Dendritic cell treated with granulocyte-macrophage colony-stimulating factor and Interleukin-4, amounts not matched to agents 40 ng/mL and 50 ng/mL, for 4 days (primary cell): ENCODE measurements at regions of chr1 and their contacts with region 1.

Region 1: DNA sequence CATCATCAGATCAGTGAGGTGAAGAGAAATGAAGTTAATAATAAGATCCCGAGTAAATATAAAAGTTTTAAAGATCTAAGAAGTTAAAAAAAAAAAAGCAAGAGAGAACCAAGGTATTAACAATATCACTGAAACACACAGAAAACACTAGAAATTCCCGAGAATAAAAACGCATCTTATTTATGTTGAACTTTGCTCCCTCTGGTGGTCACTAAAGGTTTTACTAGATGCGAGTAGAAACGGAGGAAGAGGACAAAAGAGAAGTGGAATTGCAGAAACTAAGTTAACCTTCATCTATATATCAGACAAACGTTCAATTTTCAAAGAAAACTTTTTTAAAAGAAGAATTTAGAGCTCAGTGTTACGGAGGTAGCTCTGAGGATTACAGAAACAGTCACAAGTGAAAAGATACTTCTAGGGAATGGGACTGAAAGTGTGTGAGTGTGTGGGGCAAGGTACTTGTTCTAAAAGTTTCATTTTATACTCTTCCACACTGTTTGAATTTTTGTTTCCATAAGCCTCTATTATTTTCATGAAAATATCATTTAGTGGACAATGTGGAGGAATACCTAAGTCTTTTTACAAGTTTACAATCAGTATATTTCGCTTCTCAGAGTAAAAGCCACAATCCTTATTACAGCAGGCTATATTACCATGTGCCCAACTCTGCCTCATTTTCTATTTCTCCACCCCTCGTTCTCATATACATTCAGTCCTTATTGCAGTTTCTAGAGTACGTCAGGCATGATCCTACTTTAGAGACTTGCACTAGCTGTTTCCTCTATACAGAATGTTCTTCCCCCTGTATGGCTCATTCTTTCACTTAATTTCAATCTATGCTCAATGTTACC is 19.7 kb downstream of the ACBD6 start:
- H3K4me3 Mint-ChIP-seq: no peak overlapping the region
- H3K27ac Mint-ChIP-seq: no peak overlapping the region
- H3K4me1 Mint-ChIP-seq: peaks cover 6% of the 10 kb centered on the region
- H3K27me3 Mint-ChIP-seq: no peaks in the 10 kb centered on the region

Region 2: GRCh38 chr1:179706339-179706941 is 776.2 kb before region 1 on chr1:
- intact Hi-C with region 1: loop called (anchors 5 kb)
- H3K4me3 Mint-ChIP-seq: no peak overlapping the region
- H3K27ac Mint-ChIP-seq: no peak overlapping the region
- H3K4me1 Mint-ChIP-seq: no peaks in the 10 kb centered on the region
- H3K27me3 Mint-ChIP-seq: no peaks in the 10 kb centered on the region

Region 3: GRCh38 chr1:180188091-180188506 is 294.6 kb before region 1 on chr1:
- intact Hi-C with region 1: loop called (anchors 5 kb)
- H3K4me3 Mint-ChIP-seq: no peak overlapping the region
- H3K27ac Mint-ChIP-seq: no peak overlapping the region
- H3K4me1 Mint-ChIP-seq: peaks cover 8% of the 10 kb centered on the region
- H3K27me3 Mint-ChIP-seq: no peaks in the 10 kb centered on the region

Region 4: DNA sequence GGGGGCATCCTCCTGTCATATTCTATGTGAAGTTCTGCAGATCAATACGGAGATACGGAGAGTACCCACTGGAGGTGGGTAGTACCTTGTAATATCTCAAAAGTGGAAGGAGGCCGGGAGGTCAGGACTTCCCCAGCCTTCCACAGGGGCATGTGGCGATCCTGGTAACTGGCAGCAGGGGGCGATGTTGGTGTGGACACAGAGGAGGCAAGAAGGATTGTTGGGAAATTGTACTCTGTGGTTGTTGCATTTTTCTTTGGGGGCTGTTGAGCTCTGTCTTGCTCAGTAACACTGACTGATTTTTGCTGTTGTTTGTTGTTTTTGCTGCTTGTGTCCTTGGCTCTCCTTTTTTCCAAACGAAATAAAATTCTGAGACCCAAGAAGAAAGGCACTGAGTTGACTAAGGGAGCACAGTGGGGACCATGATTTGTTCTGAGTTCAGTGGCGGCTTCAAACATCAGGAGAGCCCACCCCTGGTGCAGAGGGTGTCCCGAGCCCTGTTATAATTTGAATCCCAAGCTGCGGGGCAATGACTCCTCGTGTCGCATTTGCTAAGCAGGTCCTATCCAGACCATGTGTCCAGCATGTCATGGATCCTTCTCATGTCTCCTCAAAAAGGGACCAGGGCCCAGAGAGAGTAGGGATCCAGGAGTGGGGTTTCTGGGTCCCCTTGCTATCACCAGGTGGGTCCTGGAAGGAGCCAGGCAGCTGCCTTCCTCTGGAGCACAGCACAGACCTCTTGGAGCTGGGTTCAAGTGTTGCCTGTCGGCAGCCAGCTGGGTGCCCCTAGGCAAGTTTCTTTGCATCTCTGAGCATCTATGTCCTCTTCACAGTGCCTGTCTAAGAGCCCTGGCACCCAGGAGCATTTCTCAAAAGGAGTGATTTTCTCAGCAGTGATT is 229.8 kb before region 1 on chr1:
- intact Hi-C with region 1: loop called (anchors 1 kb)
- H3K4me3 Mint-ChIP-seq: no peak overlapping the region
- H3K27ac Mint-ChIP-seq: peak overlapping the region; percentile 53
- H3K4me1 Mint-ChIP-seq: peaks cover 28% of the 10 kb centered on the region
- H3K27me3 Mint-ChIP-seq: peaks cover 29% of the 10 kb centered on the region

Region 5: GRCh38 chr1:180415985-180416633 is 66.5 kb before region 1 on chr1:
- intact Hi-C with region 1: loop called (anchors 5 kb)
- H3K4me3 Mint-ChIP-seq: no peak overlapping the region
- H3K27ac Mint-ChIP-seq: no peak overlapping the region
- H3K4me1 Mint-ChIP-seq: peaks cover 5% of the 10 kb centered on the region
- H3K27me3 Mint-ChIP-seq: no peaks in the 10 kb centered on the region

Region 6: DNA sequence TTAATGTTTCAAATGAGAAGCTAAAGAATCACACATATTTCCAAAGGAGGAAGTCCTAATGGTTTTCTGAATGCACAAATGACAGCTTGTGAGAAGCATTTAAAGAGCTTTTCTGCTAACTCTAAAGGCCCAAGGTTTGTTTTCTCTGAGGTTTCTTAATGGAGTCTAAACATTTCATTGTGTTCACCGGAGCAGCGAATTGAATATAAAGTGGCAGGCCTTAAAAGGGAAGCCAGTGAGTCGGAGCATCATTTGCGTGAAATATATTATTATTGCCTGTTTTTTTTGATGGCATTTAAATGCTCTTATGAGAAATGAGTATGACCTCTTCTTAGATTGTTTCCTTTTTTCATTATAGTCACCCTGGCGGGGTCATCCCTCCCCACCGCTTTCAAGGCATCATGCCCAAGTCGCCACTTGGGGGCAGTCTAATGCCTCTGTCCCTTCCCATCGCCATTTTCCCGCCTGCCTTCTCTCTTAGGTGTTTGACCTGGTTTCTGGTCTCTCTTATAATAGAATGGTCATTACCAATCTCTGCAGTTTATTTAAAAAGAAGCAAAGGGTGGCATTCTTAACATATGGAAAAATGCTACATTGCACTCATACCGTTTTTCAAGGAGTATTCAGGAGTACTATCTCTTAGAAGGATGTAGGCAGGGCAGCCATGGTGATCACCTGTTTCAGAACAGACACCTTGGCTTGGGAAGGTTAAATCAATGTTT is 50.8 kb after region 1 on chr1:
- intact Hi-C with region 1: no loop called
- H3K4me3 Mint-ChIP-seq: no peak overlapping the region
- H3K27ac Mint-ChIP-seq: no peak overlapping the region
- H3K4me1 Mint-ChIP-seq: no peaks in the 10 kb centered on the region
- H3K27me3 Mint-ChIP-seq: peaks cover 4% of the 10 kb centered on the region